ENCODE measurements at regions of chr22 and their contacts with region 1.

Region 1: GRCh38 chr22:42743501-42743991 is 22.9 kb upstream of the A4GALT start:
- DNase-seq: peak; percentile 79 to 88
- H3K4me3 ChIP-seq: no peak overlapping the region
- H3K27ac ChIP-seq: peak overlapping the region; percentile 65 to 74
- H3K4me1 ChIP-seq: peaks cover 0 to 12% of the 10 kb centered on the region in 2 donors
- H3K27me3 ChIP-seq: no peaks in the 10 kb centered on the region
- CTCF ChIP-seq: peak in 1 of 4 experiments; percentile 17
- POLR2A ChIP-seq: no peak

Region 2: GRCh38 chr22:42805016-42805997 is 61.8 kb after region 1 on chr22:
- intact Hi-C with region 1: loop called (anchors 10 kb)
- DNase-seq: peak in 1 of 2 donors; percentile 57
- H3K4me3 ChIP-seq: no peak overlapping the region
- H3K27ac ChIP-seq: peak overlapping the region; percentile 63 to 72
- H3K4me1 ChIP-seq: no peaks in the 10 kb centered on the region
- H3K27me3 ChIP-seq: no peaks in the 10 kb centered on the region
- CTCF ChIP-seq: no peak
- POLR2A ChIP-seq: no peak